CD4-positive, alpha-beta memory T cell (primary cell): ENCODE measurements at regions of chr3 and their contacts with region 1.

Region 1: GRCh38 chr3:114290911-114291901 is 2.6 kb upstream of the TIGIT start:
- DNase-seq: peak; percentile 85 to 93 (median 87)
- H3K4me3 ChIP-seq: peak overlapping the region; percentile 38 to 42
- H3K4me3 Mint-ChIP-seq: peak overlapping the region; percentile 79 to 91 (median 86)
- H3K27ac ChIP-seq: peak overlapping the region; percentile 76
- H3K27ac Mint-ChIP-seq: peak overlapping the region; percentile 90 to 97 (median 95)
- H3K4me1 ChIP-seq: peaks cover 49% of the 10 kb centered on the region
- H3K4me1 Mint-ChIP-seq: peaks cover 27 to 56% (median 43%) of the 10 kb centered on the region in 4 donors
- H3K27me3 ChIP-seq: no peaks in the 10 kb centered on the region
- H3K27me3 Mint-ChIP-seq: no peaks in the 10 kb centered on the region

Region 2: GRCh38 chr3:114223143-114223542 is 68.1 kb before region 1 on chr3:
- CTCF ChIA-PET with region 1: interaction called, 138 read pairs
- POLR2A ChIA-PET with region 1: interaction called, 309 read pairs
- intact Hi-C with region 1: loop called (anchors 2 kb)
- DNase-seq: peak; percentile 55 to 69 (median 56)
- H3K4me3 ChIP-seq: no peak overlapping the region
- H3K4me3 Mint-ChIP-seq: peak overlapping the region in 5 of 8 donors; percentile 31 to 78 (median 62)
- H3K27ac ChIP-seq: peak overlapping the region; percentile 51
- H3K27ac Mint-ChIP-seq: peak overlapping the region; percentile 78 to 96 (median 92)
- H3K4me1 ChIP-seq: peaks cover 98% of the 10 kb centered on the region
- H3K4me1 Mint-ChIP-seq: peaks cover 0 to 71% (median 32%) of the 10 kb centered on the region in 4 donors
- H3K27me3 ChIP-seq: no peaks in the 10 kb centered on the region
- H3K27me3 Mint-ChIP-seq: no peaks in the 10 kb centered on the region

Region 3: GRCh38 chr3:114241262-114241661 is 49.9 kb before region 1 on chr3:
- CTCF ChIA-PET with region 1: interaction called, 11 read pairs
- POLR2A ChIA-PET with region 1: no interaction called
- intact Hi-C with region 1: no loop called
- DNase-seq: no peak
- H3K4me3 ChIP-seq: no peak overlapping the region
- H3K4me3 Mint-ChIP-seq: no peak overlapping the region
- H3K27ac ChIP-seq: no peak overlapping the region
- H3K27ac Mint-ChIP-seq: peak overlapping the region in 4 of 7 donors; percentile 1 to 41 (median 8)
- H3K4me1 ChIP-seq: peaks cover 9% of the 10 kb centered on the region
- H3K4me1 Mint-ChIP-seq: peaks cover 9 to 22% (median 15%) of the 10 kb centered on the region in 4 donors
- H3K27me3 ChIP-seq: no peaks in the 10 kb centered on the region
- H3K27me3 Mint-ChIP-seq: no peaks in the 10 kb centered on the region

Region 4: DNA sequence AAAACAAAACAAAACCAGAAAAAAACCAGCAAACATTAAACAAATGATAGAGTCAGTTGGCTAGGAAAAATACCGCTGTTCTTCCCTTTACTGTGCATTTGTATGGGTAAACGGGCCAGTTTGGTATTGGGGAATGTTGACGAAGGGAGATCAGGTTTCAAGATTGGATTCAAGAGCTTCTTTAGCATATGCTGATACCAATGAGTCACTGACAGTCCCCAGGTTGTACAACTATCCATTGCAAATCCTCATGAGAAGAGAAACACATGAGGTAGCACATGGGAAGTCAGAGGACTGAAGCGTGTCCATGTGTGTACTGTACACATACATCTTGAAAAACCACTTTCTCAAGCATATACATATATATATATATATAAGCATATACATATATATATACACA is 28.2 kb after region 1 on chr3:
- CTCF ChIA-PET with region 1: interaction called, 12 read pairs
- POLR2A ChIA-PET with region 1: interaction called, 7 read pairs
- intact Hi-C with region 1: no loop called
- DNase-seq: no peak
- H3K4me3 ChIP-seq: no peak overlapping the region
- H3K4me3 Mint-ChIP-seq: peak overlapping the region in 1 of 8 donors; percentile 60
- H3K27ac ChIP-seq: no peak overlapping the region
- H3K27ac Mint-ChIP-seq: peak overlapping the region in 2 of 7 donors; percentile 5 to 43
- H3K4me1 ChIP-seq: peaks cover 83% of the 10 kb centered on the region
- H3K4me1 Mint-ChIP-seq: peaks cover 26 to 67% (median 48%) of the 10 kb centered on the region in 4 donors
- H3K27me3 ChIP-seq: no peaks in the 10 kb centered on the region
- H3K27me3 Mint-ChIP-seq: no peaks in the 10 kb centered on the region

Region 5: GRCh38 chr3:114362815-114363214 is 71.6 kb after region 1 on chr3:
- CTCF ChIA-PET with region 1: interaction called, 14 read pairs
- POLR2A ChIA-PET with region 1: interaction called, 5 read pairs
- intact Hi-C with region 1: no loop called
- DNase-seq: no peak
- H3K4me3 ChIP-seq: no peak overlapping the region
- H3K4me3 Mint-ChIP-seq: no peak overlapping the region
- H3K27ac ChIP-seq: no peak overlapping the region
- H3K27ac Mint-ChIP-seq: peak overlapping the region in 1 of 7 donors; percentile 4
- H3K4me1 ChIP-seq: no peaks in the 10 kb centered on the region
- H3K4me1 Mint-ChIP-seq: no peaks in the 10 kb centered on the region
- H3K27me3 ChIP-seq: no peaks in the 10 kb centered on the region
- H3K27me3 Mint-ChIP-seq: no peaks in the 10 kb centered on the region

Region 6: DNA sequence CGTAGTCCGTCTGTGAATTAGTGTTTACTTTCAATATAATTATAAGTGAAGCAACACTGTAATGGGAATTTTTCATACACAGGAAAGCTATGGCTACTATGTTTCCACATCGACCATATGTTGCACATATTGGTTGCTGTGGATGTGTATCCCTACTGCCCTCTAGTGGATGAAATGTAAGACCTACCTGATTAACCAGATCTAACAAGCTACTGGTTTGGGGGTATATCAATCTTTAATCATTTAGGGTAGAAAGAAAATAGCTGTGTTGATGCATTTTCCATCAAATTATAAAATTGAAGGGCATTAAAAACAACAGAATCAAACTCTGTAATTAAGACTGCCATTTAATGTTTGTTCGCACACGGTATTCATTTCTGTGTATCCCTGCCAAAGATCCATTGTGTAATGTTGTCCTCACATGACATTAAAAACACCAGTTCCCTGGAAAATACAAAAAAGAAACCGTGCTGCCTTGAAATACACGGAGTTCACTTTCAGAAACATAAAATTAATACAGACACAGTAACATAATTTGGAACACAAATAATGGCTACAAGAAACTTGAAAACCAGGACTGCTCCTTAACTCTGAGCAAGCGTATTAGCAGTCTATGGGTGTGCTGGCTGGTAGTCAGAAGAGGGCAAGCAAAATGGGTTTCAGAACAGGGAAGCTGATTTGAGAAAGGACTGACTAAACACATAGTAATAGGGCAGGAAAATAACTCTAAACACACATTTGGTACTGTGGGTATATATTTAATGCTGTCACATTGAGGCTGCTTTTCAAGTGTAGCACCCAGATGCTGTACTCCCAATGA is 127.7 kb after region 1 on chr3:
- CTCF ChIA-PET with region 1: interaction called, 106 read pairs
- POLR2A ChIA-PET with region 1: interaction called, 10 read pairs
- intact Hi-C with region 1: loop called (anchors 1 kb)
- DNase-seq: peak; percentile 51 to 68 (median 65)
- H3K4me3 ChIP-seq: no peak overlapping the region
- H3K4me3 Mint-ChIP-seq: no peak overlapping the region
- H3K27ac ChIP-seq: no peak overlapping the region
- H3K27ac Mint-ChIP-seq: peak overlapping the region in 2 of 7 donors; percentile 11 to 19
- H3K4me1 ChIP-seq: peaks cover 3% of the 10 kb centered on the region
- H3K4me1 Mint-ChIP-seq: peaks cover 3 to 7% (median 5%) of the 10 kb centered on the region in 4 donors
- H3K27me3 ChIP-seq: no peaks in the 10 kb centered on the region
- H3K27me3 Mint-ChIP-seq: no peaks in the 10 kb centered on the region

Region 7: DNA sequence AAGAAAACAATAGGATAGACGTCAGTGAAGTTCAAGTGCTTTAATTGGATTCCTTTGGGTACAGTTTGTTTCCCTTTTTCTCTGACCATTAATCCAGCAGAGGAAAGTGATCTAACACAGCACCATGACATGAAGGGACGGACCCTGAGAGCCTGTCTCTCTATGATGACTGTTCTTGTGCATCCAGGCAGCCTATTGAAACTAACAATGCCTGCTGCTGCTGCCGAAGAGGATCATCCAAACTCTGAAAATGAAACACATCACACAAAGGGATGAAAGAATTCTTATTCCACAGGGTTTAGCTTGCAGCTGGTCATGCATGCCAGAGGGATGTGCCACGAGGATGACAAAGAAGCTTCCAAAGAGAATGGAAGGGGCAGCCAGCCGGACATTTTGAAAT is 780.4 kb after region 1 on chr3:
- CTCF ChIA-PET with region 1: no interaction called
- POLR2A ChIA-PET with region 1: no interaction called
- intact Hi-C with region 1: no loop called
- DNase-seq: no peak
- H3K4me3 ChIP-seq: no peak overlapping the region
- H3K4me3 Mint-ChIP-seq: no peak overlapping the region
- H3K27ac ChIP-seq: no peak overlapping the region
- H3K27ac Mint-ChIP-seq: no peak overlapping the region
- H3K4me1 ChIP-seq: no peaks in the 10 kb centered on the region
- H3K4me1 Mint-ChIP-seq: peaks cover 12 to 37% (median 28%) of the 10 kb centered on the region in 4 donors
- H3K27me3 ChIP-seq: no peaks in the 10 kb centered on the region
- H3K27me3 Mint-ChIP-seq: no peaks in the 10 kb centered on the region